Head of caudate nucleus (tissue), 42 donors: ENCODE measurements at regions of chr16 and their contacts with region 1.

Region 1: GRCh38 chr16:29862884-29863668 is at the start of gene CDIPT:
- DNase-seq: peak; percentile 87 to 99 (median 96)

Region 2: DNA sequence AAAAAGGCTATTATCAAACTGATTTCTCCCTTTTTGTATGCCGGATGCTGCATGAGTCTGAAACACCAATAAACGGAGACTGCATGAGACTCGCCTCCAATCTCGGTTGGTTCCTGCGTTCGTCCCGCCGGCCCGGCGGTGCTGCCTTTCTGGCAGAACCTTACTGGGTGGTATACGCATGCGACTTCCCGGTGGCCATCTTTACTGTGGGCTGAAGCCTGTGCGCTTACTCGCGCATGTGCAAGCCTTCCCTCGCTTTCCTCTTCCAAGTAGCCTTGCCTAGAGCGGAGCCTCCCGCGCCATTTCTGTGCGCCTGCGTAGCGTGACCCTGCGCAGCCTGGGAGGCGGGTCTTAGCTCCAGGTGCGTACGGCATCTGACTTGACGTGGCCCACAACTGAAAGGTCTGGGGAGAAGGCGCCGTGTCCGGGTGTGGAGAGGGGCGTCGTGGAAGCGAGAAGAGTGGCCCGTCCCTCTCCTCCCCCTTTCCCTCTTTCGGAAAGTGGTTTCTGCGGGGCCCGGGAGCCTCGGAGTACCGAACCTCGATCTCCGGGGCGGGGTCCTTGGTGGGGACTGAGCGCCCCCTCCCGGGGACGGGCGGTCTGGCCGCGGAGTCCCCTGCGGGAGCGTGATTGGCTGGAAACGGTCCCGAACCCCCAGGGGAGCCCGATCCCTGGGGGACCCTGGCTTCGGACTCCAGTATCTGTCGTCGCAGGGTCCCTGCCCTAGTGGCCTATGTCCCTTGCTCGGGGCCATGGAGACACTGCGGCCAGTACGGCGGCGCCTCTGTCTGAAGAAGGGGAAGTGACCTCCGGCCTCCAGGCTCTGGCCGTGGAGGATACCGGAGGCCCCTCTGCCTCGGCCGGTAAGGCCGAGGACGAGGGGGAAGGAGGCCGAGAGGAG is 47.0 kb before region 1 on chr16 and contains the start of gene PAGR1:
- intact Hi-C with region 1: loop called (anchors 5 kb)
- DNase-seq: peak; percentile 92 to 99 (median 98)

Region 3: GRCh38 chr16:29899516-29900101 is 36.5 kb after region 1 on chr16 and contains the start of gene SEZ6L2:
- intact Hi-C with region 1: loop called (anchors 5 kb)
- DNase-seq: peak; percentile 63 to 95 (median 84)